ENCODE measurements at regions of chr18 and their contacts with region 1.

Region 1: DNA sequence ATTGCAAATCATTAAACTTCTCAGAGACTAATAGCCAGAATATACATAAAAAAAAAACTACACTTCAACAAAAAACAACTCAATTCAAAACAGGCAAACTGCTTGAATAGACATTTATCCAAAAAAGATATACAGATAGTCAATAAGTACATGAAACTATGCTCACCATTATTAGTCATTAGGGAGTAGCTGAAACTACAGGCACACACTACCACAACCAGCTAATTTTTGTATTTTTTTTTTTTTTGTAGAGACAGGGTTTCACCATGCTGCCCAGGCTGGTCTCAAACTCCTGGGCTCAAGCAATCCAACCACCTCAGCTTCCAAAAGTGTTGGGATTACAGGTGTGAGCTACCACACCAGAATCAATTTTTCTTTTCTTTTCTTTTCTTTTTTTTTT is 16.9 kb downstream of the RPRD1A start:
- DNase-seq: no peak
- H3K4me3 ChIP-seq: no peak overlapping the region
- H3K27ac ChIP-seq: no peak overlapping the region
- H3K4me1 ChIP-seq: no peaks in the 10 kb centered on the region
- H3K27me3 ChIP-seq: no peaks in the 10 kb centered on the region

Region 2: GRCh38 chr18:35861367-35862118 is 188.9 kb before region 1 on chr18:
- CTCF ChIA-PET with region 1: no interaction called
- POLR2A ChIA-PET with region 1: no interaction called
- DNase-seq: peak in 1 of 3 donors; percentile 3
- H3K4me3 ChIP-seq: no peak overlapping the region
- H3K27ac ChIP-seq: no peak overlapping the region
- H3K4me1 ChIP-seq: no peaks in the 10 kb centered on the region
- H3K27me3 ChIP-seq: no peaks in the 10 kb centered on the region

Region 3: GRCh38 chr18:35983818-35984217 is 66.7 kb before region 1 on chr18:
- CTCF ChIA-PET with region 1: no interaction called
- POLR2A ChIA-PET with region 1: no interaction called
- DNase-seq: no peak
- H3K4me3 ChIP-seq: no peak overlapping the region
- H3K27ac ChIP-seq: no peak overlapping the region
- H3K4me1 ChIP-seq: no peaks in the 10 kb centered on the region
- H3K27me3 ChIP-seq: no peaks in the 10 kb centered on the region

Region 4: DNA sequence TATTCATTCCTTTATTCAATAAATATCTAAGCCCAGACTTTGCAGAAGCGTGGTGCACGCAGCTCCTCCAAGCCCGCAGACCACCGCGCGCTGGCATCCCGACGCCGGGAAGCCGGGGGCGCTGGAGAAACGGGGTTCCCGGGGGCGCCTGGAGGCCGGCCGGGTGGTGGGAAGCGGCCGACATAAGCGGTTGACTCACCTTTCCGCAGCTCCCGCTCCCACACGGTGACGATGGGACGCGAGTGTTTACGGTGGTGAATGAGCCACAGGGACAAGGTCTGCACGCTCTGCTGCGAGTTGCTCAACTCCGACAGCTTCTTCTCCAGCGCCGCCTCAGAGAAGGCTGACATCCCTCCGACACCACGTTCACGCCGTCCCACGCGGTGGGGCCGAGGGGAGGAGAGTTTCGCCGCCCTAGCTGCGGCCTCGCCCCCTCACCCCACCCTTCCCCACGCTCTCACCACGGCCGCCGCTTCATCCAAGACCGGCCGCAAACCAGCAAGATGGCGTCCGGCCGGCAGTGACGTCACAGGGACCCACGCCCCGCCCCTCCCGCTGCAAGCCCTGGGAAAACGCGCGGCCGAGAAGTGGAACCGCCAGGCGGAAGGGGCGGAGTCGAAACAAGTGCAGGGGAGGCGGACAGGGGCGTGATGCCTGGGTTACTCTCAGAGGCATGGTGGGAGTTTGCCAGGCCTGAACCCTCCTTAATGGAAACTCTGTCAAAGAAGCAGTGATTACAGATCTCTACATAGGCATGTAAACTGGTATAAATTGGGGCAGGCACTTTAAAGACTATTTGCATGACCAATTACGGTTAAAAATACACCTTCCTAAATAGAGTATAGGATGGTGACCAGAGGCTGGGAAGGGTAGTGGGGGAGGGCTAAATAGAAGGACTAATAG is 16.8 kb after region 1 on chr18 and contains the start of gene RPRD1A:
- CTCF ChIA-PET with region 1: no interaction called
- POLR2A ChIA-PET with region 1: interaction called, 13 read pairs
- DNase-seq: peak; percentile 95 to 98 (median 97)
- H3K4me3 ChIP-seq: peak within 1 kb of the TSS; percentile 80 to 98 (median 95)
- H3K27ac ChIP-seq: peak within 1 kb of the TSS; percentile 84 to 92
- H3K4me1 ChIP-seq: peaks cover 2 to 20% (median 15%) of the 10 kb centered on the region in 4 experiments
- H3K27me3 ChIP-seq: peaks cover 0 to 5% (median 0%) of the 10 kb centered on the region in 5 experiments

Region 5: GRCh38 chr18:36107477-36107876 is 57.0 kb after region 1 on chr18:
- CTCF ChIA-PET with region 1: no interaction called
- POLR2A ChIA-PET with region 1: no interaction called
- DNase-seq: no peak
- H3K4me3 ChIP-seq: no peak overlapping the region
- H3K27ac ChIP-seq: no peak overlapping the region
- H3K4me1 ChIP-seq: no peaks in the 10 kb centered on the region
- H3K27me3 ChIP-seq: no peaks in the 10 kb centered on the region

Measured in common myeloid progenitor, CD34-positive (primary cell).